H1 (cell line): ENCODE measurements at regions of chr6 and their contacts with region 1.

Region 1: GRCh38 chr6:107196152-107196551 is 80.8 kb upstream of the BEND3 start:
- DNase-seq: no peak
- H3K4me3 ChIP-seq: no peak overlapping the region
- H3K27ac ChIP-seq: no peak overlapping the region
- H3K4me1 ChIP-seq: no peaks in the 10 kb centered on the region
- H3K27me3 ChIP-seq: no peaks in the 10 kb centered on the region
- CTCF ChIP-seq: no peak
- EP300 ChIP-seq: no peak
- POLR2A ChIP-seq: no peak
- RAD21 ChIP-seq: no peak

Region 2: GRCh38 chr6:107154131-107154800 is 41.9 kb before region 1 on chr6:
- CTCF ChIA-PET with region 1: no interaction called
- POLR2A ChIA-PET with region 1: no interaction called
- DNase-seq: no peak
- H3K4me3 ChIP-seq: no peak overlapping the region
- H3K27ac ChIP-seq: peak overlapping the region; percentile 48; the same call in 1 of the 2 replicates
- H3K4me1 ChIP-seq: peaks cover 5 to 10% (median 8%) of the 10 kb centered on the region in 4 experiments; a peak in 6 of 7 replicates
- H3K27me3 ChIP-seq: no peaks in the 10 kb centered on the region
- CTCF ChIP-seq: no peak
- EP300 ChIP-seq: no peak
- POLR2A ChIP-seq: no peak
- RAD21 ChIP-seq: no peak

Region 3: GRCh38 chr6:107179004-107179403 is 17.1 kb before region 1 on chr6:
- CTCF ChIA-PET with region 1: interaction called, 17 read pairs
- POLR2A ChIA-PET with region 1: no interaction called
- DNase-seq: no peak
- H3K4me3 ChIP-seq: no peak overlapping the region
- H3K27ac ChIP-seq: no peak overlapping the region
- H3K4me1 ChIP-seq: no peaks in the 10 kb centered on the region
- H3K27me3 ChIP-seq: no peaks in the 10 kb centered on the region
- CTCF ChIP-seq: peak in 1 of 3 experiments; percentile 47; a peak in 1 of 4 replicates
- EP300 ChIP-seq: no peak
- POLR2A ChIP-seq: no peak
- RAD21 ChIP-seq: peak; percentile 49 to 54

Region 4: GRCh38 chr6:107185391-107185970 is 10.7 kb before region 1 on chr6:
- CTCF ChIA-PET with region 1: interaction called, 16 read pairs
- POLR2A ChIA-PET with region 1: interaction called, 4 read pairs
- DNase-seq: no peak
- H3K4me3 ChIP-seq: no peak overlapping the region
- H3K27ac ChIP-seq: no peak overlapping the region
- H3K4me1 ChIP-seq: no peaks in the 10 kb centered on the region
- H3K27me3 ChIP-seq: no peaks in the 10 kb centered on the region
- CTCF ChIP-seq: peak; percentile 10 to 57 (median 51)
- EP300 ChIP-seq: no peak
- POLR2A ChIP-seq: no peak
- RAD21 ChIP-seq: peak; percentile 79 to 82